IMR-90 (cell line): ENCODE measurements at regions of chr18 and their contacts with region 1.

Region 1: DNA sequence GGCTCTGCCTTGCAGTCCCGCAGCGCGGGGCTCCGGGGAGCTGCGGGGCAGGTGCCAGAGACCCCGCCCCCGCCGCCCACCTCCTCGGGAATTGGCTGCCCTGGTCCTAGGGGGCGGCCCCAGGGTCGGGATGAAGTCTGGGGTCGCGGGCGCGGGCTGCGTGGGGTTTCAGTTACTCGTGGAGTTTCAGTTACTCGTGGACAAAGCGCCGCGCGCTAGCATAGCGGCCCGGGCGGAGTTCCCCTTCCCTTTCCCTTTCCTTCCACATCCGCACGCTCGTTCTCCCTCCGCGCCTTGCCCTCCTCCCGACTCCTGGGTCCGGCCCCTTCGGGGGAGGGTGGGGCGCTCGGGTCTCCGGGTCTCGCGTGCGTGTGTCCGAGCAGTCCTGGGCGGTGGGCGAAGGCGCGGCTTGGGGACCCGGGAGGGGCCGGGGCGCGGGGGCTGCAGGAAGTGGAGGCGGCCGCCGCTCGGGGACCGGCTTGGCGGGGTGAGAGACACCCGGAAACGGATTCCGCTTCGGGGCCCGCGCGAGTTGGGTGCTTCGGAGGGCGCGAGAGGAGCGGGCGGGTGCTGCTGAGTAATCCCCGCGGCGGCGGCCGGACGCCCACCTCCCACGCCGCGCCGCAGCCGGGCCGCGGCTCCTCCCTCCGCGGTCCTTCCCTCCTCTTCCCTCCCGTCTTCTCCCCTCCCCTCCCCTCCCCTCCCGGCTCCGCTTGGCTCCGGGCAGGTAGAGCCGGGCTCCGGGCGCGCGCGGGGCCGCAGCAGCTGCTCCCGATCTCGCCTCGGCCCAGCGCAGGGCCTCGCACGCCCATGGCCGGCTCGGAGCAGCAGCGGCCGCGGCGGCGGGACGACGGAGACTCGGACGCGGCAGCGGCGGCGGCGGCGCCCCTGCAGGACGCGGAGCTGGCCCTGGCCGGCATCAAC is at the start of gene TTC39C:
- DNase-seq: peak; percentile 71
- ATAC-seq: peak; percentile 85
- H3K4me3 ChIP-seq: peak within 1 kb of the TSS; percentile 82
- H3K27ac ChIP-seq: peak within 1 kb of the TSS; percentile 97
- H3K4me1 ChIP-seq: peaks cover 4% of the 10 kb centered on the region; the same call in 1 of the 2 replicates
- H3K27me3 ChIP-seq: peaks cover 7% of the 10 kb centered on the region
- CTCF ChIP-seq: no peak
- POLR2A ChIP-seq: peak; percentile 57; the same call in 1 of the 2 replicates
- RAD21 ChIP-seq: no peak; the same call in 1 of the 2 replicates
- total RNA-seq, gene TTC39C: 20.8 and 22.8 TPM in 2 replicates

Region 2: DNA sequence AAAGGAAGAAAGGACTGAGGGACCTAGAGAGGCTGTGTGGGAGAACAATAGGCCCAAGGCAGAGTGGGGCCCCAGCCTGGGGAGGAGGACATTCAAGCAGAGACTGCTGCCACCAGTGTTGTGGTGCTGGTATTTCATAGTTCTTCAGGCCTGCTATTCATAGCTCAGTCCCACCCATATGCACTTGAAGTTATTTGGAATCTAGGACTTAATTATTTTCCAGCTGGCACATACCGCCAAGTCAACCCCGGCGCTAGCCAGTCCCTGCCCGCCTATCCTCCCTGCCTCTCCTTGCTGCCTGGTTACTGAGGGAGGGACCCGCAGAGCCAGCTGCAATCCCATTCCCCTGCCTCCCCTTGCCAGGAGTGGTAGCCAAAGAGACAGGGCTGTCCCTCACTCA is 737.9 kb before region 1 on chr18:
- CTCF ChIA-PET with region 1: no interaction called
- POLR2A ChIA-PET with region 1: no interaction called
- dilution Hi-C with region 1: no loop called
- in situ Hi-C with region 1: no loop called
- intact Hi-C with region 1: no loop called
- DNase-seq: no peak
- ATAC-seq: no peak
- H3K4me3 ChIP-seq: no peak overlapping the region
- H3K27ac ChIP-seq: no peak overlapping the region
- H3K4me1 ChIP-seq: no peaks in the 10 kb centered on the region; the same call in 1 of the 2 replicates
- H3K27me3 ChIP-seq: no peaks in the 10 kb centered on the region
- CTCF ChIP-seq: no peak
- POLR2A ChIP-seq: no peak
- RAD21 ChIP-seq: no peak

Region 3: GRCh38 chr18:23629444-23629946 is 384.8 kb before region 1 on chr18:
- CTCF ChIA-PET with region 1: no interaction called
- POLR2A ChIA-PET with region 1: no interaction called
- dilution Hi-C with region 1: no loop called
- in situ Hi-C with region 1: no loop called
- intact Hi-C with region 1: loop called (anchors 10 kb)
- DNase-seq: no peak
- ATAC-seq: no peak
- H3K4me3 ChIP-seq: no peak overlapping the region
- H3K27ac ChIP-seq: no peak overlapping the region
- H3K4me1 ChIP-seq: peaks cover 8% of the 10 kb centered on the region
- H3K27me3 ChIP-seq: peaks cover 2% of the 10 kb centered on the region; the same call in 1 of the 2 replicates
- CTCF ChIP-seq: no peak
- POLR2A ChIP-seq: no peak
- RAD21 ChIP-seq: no peak

Region 4: GRCh38 chr18:23776306-23776705 is 238.0 kb before region 1 on chr18:
- CTCF ChIA-PET with region 1: no interaction called
- POLR2A ChIA-PET with region 1: no interaction called
- dilution Hi-C with region 1: no loop called
- in situ Hi-C with region 1: no loop called
- intact Hi-C with region 1: no loop called
- DNase-seq: no peak
- ATAC-seq: no peak
- H3K4me3 ChIP-seq: no peak overlapping the region
- H3K27ac ChIP-seq: no peak overlapping the region
- H3K4me1 ChIP-seq: peaks cover 8% of the 10 kb centered on the region
- H3K27me3 ChIP-seq: no peaks in the 10 kb centered on the region; the same call in 1 of the 2 replicates
- CTCF ChIP-seq: no peak
- POLR2A ChIP-seq: no peak
- RAD21 ChIP-seq: no peak

Region 5: DNA sequence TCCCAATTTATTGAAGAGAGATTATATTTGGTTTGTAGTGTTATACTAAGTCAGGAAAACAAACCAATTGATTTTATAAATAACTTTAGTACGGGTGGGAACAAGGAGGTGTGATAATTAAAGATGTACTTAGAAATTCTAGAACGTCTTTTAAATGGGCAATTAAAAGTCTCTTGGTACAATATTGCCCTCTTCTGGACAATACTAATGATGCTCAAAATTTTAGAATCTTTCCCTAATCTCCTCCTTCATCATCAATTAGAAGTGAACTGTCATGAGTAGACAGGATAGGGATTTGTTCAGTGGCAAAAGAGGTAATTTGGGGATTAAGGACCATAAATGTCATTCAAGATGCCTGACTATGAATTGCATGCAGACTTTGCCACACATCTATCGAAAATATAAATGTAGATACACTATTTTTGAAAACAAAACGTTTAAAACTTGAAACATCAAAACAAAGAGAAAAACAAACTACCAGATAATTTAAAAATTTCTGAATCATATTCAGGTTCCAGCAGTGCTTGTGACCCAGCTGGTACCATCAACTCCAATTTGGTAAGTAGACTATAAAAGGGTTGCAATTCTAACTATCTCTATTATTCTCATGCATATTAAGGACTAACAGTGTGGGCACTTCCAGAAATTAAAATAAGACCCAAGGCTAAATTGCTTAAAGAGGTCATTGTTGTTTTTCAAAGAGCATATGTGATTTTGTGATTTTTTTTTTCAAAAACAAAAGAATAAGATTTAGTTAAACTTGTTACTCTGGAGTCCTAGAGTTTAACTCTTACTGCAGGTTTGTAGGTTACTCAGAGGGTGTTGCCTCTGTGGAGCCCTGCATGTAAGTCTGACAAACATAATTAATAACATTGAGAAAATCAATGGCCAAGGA is 201.5 kb before region 1 on chr18:
- CTCF ChIA-PET with region 1: no interaction called
- POLR2A ChIA-PET with region 1: no interaction called
- dilution Hi-C with region 1: no loop called
- in situ Hi-C with region 1: no loop called
- intact Hi-C with region 1: loop called (anchors 5 kb)
- DNase-seq: peak; percentile 19
- ATAC-seq: peak; percentile 61; the same call in 1 of the 2 replicates
- H3K4me3 ChIP-seq: no peak overlapping the region
- H3K27ac ChIP-seq: no peak overlapping the region
- H3K4me1 ChIP-seq: no peaks in the 10 kb centered on the region
- H3K27me3 ChIP-seq: peaks cover 30% of the 10 kb centered on the region
- CTCF ChIP-seq: peak; percentile 66
- POLR2A ChIP-seq: no peak
- RAD21 ChIP-seq: peak; percentile 67

Region 6: DNA sequence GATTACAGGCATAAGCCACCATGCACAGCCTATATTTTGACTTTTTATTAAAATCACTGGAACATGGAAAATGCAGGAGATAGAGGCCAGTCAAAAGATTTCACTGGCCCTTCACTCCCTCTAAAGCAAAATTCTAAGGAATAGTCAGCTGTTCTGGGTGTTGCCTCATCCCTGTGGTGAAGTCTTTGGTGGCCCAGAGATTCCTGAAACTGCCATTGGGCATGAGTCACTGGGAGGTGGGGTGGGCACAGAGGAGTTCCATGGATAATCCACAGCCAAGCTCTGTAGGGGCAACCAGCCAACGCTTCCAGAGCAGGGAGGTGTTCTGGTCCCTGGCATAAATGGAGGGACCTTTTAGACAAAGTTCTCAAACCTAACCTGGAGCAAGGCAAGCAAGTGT is 89.5 kb before region 1 on chr18:
- CTCF ChIA-PET with region 1: no interaction called
- POLR2A ChIA-PET with region 1: no interaction called
- dilution Hi-C with region 1: no loop called
- in situ Hi-C with region 1: no loop called
- intact Hi-C with region 1: loop called (anchors 5 kb)
- DNase-seq: peak; percentile 50
- ATAC-seq: peak; percentile 55
- H3K4me3 ChIP-seq: no peak overlapping the region
- H3K27ac ChIP-seq: no peak overlapping the region
- H3K4me1 ChIP-seq: peaks cover 7% of the 10 kb centered on the region
- H3K27me3 ChIP-seq: no peaks in the 10 kb centered on the region
- CTCF ChIP-seq: no peak
- POLR2A ChIP-seq: no peak
- RAD21 ChIP-seq: no peak

Region 7: GRCh38 chr18:24075731-24076130 is 61.4 kb after region 1 on chr18:
- CTCF ChIA-PET with region 1: no interaction called
- POLR2A ChIA-PET with region 1: no interaction called
- dilution Hi-C with region 1: no loop called
- in situ Hi-C with region 1: no loop called
- intact Hi-C with region 1: loop called (anchors 1 kb)
- DNase-seq: no peak
- ATAC-seq: no peak; the same call in 1 of the 2 replicates
- H3K4me3 ChIP-seq: no peak overlapping the region
- H3K27ac ChIP-seq: peak overlapping the region; percentile 56
- H3K4me1 ChIP-seq: peaks cover 4% of the 10 kb centered on the region
- H3K27me3 ChIP-seq: no peaks in the 10 kb centered on the region
- CTCF ChIP-seq: no peak
- POLR2A ChIP-seq: no peak
- RAD21 ChIP-seq: no peak

Region 8: DNA sequence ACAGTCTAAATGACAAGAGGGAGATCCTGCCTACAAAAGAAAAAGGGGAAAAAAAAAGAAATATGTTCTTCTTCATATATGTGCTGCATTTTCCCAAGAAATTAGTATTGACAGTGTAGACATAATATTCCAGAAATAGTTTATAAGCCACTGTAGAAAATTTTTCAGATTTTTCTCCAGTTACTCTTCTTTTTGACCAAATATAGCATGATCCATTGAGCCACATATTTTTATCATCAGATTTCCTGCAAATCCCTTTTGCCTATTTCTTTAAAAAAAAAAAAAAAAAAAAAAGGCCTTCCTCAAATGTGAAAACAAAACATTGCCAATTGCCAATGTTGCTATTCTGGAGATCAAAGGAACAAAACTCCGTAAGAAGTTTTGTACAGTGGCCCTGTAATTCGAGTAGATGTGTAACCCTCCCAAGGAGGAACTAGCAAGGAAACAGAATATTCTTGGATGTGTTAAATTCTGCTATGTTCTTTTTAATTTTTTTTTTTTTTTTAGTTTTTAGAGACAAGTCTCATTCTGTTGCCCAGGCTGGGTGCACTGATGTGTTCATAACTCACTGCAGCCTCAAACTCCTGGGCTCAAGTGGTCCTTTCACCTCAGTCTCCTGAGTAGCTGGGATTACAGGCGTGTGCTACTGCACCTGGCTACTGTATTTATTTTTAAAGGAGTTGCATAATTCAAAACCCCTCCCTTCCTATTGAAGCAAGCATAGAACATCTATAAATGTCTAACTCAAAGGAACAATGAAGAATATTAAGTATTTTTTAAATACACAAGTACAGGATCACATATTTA is 112.0 kb after region 1 on chr18:
- CTCF ChIA-PET with region 1: no interaction called
- POLR2A ChIA-PET with region 1: no interaction called
- dilution Hi-C with region 1: no loop called
- in situ Hi-C with region 1: no loop called
- intact Hi-C with region 1: no loop called
- DNase-seq: peak; percentile 36
- ATAC-seq: peak; percentile 43
- H3K4me3 ChIP-seq: no peak overlapping the region
- H3K27ac ChIP-seq: no peak overlapping the region
- H3K4me1 ChIP-seq: peaks cover 6% of the 10 kb centered on the region
- H3K27me3 ChIP-seq: no peaks in the 10 kb centered on the region
- CTCF ChIP-seq: no peak
- POLR2A ChIP-seq: no peak
- RAD21 ChIP-seq: no peak